ENCODE measurements at regions of chr13 and their contacts with region 1.

Region 1: DNA sequence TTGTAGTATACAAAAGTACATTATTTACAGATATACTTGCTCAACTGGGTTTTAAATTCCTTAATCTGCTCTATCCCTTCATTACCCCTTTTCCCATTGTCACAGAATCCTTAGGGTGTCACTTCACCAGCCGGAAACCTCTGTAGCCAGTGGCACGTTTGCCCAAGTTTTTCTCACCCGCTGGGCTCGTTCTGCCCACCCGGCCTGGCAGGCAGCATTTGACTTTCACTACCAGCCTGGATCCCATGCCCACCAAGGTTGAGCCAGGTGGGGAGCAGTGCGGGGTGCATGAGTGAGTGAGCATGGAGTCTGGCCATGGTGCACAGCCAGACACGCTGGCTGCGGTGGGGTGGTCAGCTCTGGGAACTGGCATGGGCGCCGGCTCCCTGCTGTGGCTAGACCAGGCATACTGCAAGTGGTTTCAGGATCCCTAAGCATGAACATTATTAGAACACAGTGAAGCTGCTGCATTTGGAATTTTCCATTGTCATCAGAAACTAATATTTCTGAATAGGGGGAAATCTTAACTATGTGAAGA is 98.3 kb downstream of the NALCN start:
- DNase-seq: no peak
- ATAC-seq: no peak

Region 2: GRCh38 chr13:101267656-101268055 is 50.4 kb before region 1 on chr13:
- intact Hi-C with region 1: loop called (anchors 1 kb)
- DNase-seq: no peak
- ATAC-seq: no peak

Region 3: DNA sequence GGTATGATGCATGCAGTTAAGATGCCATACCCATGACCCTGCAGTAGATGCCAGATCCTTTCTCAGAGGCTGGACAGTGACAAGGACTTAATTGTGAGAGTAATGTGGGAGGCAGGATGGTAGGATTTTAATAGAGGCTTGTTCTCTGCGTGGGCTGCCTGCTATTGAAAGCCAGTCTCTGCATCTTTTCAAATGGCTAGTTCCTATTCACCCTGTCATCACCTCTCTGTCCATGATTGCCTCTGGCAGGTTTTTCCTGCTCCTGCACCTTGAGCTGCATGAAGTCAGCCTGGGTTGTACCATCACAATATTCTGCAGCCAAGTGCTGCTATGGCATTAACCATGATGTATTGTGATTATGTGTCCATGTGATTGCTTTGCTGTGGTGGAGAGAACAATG is 575.0 kb after region 1 on chr13:
- intact Hi-C with region 1: no loop called
- DNase-seq: no peak
- ATAC-seq: no peak